CD8-positive, alpha-beta T cell (primary cell): ENCODE measurements at regions of chr22 and their contacts with region 1.

Region 1: GRCh38 chr22:31661851-31662656 is at the start of gene PISD:
- DNase-seq: peak; percentile 94 to 98 (median 97)
- ATAC-seq: peak; percentile 94
- H3K4me3 ChIP-seq: peak within 1 kb of the TSS; percentile 89 to 97
- H3K4me3 Mint-ChIP-seq: peak within 1 kb of the TSS; percentile 96
- H3K27ac ChIP-seq: peak within 1 kb of the TSS; percentile 73 to 79
- H3K27ac Mint-ChIP-seq: peak within 1 kb of the TSS; percentile 96
- H3K4me1 ChIP-seq: peaks cover 18% of the 10 kb centered on the region
- H3K4me1 Mint-ChIP-seq: peaks cover 41% of the 10 kb centered on the region
- H3K27me3 ChIP-seq: no peaks in the 10 kb centered on the region
- H3K27me3 Mint-ChIP-seq: no peaks in the 10 kb centered on the region
- CTCF ChIP-seq: no peak
- total RNA-seq, gene PISD: 41.2 to 43.6 TPM

Region 2: GRCh38 chr22:31399211-31400028 is 262.6 kb before region 1 on chr22 and contains the start of gene DRG1:
- CTCF ChIA-PET with region 1: no interaction called
- POLR2A ChIA-PET with region 1: interaction called, 3 read pairs
- intact Hi-C with region 1: loop called in 1 of 2 experiments (anchors 1 kb)
- DNase-seq: peak; percentile 91 to 98 (median 97)
- ATAC-seq: peak; percentile 96
- H3K4me3 ChIP-seq: peak within 1 kb of the TSS; percentile 76 to 99
- H3K4me3 Mint-ChIP-seq: peak within 1 kb of the TSS; percentile 95
- H3K27ac ChIP-seq: peak within 1 kb of the TSS; percentile 82 to 87
- H3K27ac Mint-ChIP-seq: peak within 1 kb of the TSS; percentile 96
- H3K4me1 ChIP-seq: peaks cover 13% of the 10 kb centered on the region
- H3K4me1 Mint-ChIP-seq: peaks cover 31% of the 10 kb centered on the region
- H3K27me3 ChIP-seq: no peaks in the 10 kb centered on the region
- H3K27me3 Mint-ChIP-seq: no peaks in the 10 kb centered on the region
- CTCF ChIP-seq: no peak
- total RNA-seq, gene DRG1: 55.9 to 63.3 TPM

Region 3: DNA sequence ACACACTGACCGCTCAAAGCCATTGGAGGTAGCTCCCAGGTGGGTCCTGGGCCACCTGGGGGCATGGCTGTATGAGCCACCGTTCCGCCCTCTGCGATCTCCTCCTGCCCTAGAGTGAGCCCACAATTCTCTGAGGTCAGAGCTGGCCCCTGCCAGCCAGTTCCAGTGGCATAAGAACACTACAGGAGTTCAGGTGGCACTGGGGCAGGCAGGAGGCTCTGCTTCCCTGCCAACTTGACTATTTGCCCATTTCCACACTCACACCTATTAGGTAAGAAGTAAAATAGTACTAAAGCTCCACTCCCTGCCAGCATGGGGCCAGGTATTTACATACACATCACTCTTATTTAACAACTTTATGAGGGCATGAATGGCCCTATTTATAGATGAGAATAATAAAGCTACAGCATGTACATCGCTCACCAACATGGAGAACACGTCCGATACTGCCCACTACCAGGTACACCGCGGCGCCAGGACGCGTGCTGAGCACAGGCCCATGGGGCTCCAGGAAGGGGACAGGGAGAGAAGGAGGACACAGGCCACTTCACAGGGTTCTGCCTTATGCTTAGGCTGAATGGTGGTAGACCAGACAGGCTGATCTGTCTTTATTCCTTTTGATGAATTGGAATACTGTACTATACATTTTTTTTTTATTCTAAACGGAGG is 26.3 kb before region 1 on chr22:
- CTCF ChIA-PET with region 1: interaction called, 22 read pairs
- POLR2A ChIA-PET with region 1: interaction called, 16 read pairs
- intact Hi-C with region 1: loop called (anchors 1 kb)
- DNase-seq: peak in 1 of 9 experiments; percentile 6
- ATAC-seq: no peak
- H3K4me3 ChIP-seq: no peak overlapping the region
- H3K4me3 Mint-ChIP-seq: no peak overlapping the region
- H3K27ac ChIP-seq: no peak overlapping the region
- H3K27ac Mint-ChIP-seq: peak overlapping the region; percentile 60
- H3K4me1 ChIP-seq: peaks cover 33% of the 10 kb centered on the region
- H3K4me1 Mint-ChIP-seq: peaks cover 42% of the 10 kb centered on the region
- H3K27me3 ChIP-seq: no peaks in the 10 kb centered on the region
- H3K27me3 Mint-ChIP-seq: no peaks in the 10 kb centered on the region
- CTCF ChIP-seq: no peak

Region 4: DNA sequence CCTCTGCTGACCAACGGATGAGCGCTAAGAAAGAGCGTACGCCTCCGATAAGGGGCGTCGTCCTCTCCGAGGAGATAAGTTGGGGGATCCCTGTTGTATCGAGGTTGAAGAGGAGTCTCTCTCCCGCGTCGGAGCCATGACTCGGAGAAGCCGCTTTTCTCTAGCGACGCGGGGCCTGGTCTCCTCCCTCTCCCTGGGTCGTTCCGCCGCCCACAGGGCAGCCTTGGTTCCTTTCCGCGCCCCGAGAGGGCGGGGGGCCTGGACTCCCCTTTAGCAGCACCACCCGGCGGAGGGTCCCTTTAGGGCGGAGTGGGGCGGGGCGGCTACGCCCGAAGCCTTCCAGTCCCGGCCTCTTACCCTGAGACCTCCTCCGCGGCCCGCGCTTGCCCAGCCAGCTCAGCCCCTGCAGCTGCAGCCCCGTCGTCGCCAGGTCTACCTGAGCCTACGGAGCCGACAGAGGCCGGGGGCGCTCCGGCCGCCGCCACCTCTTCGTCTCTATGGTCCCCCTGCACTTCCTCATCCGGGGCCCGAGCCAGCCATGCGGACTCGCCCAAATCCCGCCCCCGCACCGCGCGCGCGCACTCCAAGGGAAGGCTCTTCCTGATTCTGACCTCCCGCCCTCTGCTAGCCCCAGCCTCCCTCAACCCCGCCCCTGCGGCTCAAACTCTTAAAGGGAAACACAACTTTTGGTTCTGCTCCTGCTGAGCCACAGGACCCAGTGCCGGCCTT is 87.7 kb after region 1 on chr22 and contains the start of gene PRR14L:
- CTCF ChIA-PET with region 1: interaction called, 4 read pairs
- POLR2A ChIA-PET with region 1: interaction called, 14 read pairs
- intact Hi-C with region 1: loop called (anchors 1 kb)
- DNase-seq: peak; percentile 96 to 100 (median 99)
- ATAC-seq: peak; percentile 75
- H3K4me3 ChIP-seq: peak within 1 kb of the TSS; percentile 84 to 90
- H3K4me3 Mint-ChIP-seq: peak within 1 kb of the TSS; percentile 98
- H3K27ac ChIP-seq: peak within 1 kb of the TSS; percentile 79 to 84
- H3K27ac Mint-ChIP-seq: peak within 1 kb of the TSS; percentile 97
- H3K4me1 ChIP-seq: peaks cover 40% of the 10 kb centered on the region
- H3K4me1 Mint-ChIP-seq: peaks cover 53% of the 10 kb centered on the region
- H3K27me3 ChIP-seq: no peaks in the 10 kb centered on the region
- H3K27me3 Mint-ChIP-seq: no peaks in the 10 kb centered on the region
- CTCF ChIP-seq: no peak
- total RNA-seq, gene PRR14L: 17.8 to 21.2 TPM

Region 5: DNA sequence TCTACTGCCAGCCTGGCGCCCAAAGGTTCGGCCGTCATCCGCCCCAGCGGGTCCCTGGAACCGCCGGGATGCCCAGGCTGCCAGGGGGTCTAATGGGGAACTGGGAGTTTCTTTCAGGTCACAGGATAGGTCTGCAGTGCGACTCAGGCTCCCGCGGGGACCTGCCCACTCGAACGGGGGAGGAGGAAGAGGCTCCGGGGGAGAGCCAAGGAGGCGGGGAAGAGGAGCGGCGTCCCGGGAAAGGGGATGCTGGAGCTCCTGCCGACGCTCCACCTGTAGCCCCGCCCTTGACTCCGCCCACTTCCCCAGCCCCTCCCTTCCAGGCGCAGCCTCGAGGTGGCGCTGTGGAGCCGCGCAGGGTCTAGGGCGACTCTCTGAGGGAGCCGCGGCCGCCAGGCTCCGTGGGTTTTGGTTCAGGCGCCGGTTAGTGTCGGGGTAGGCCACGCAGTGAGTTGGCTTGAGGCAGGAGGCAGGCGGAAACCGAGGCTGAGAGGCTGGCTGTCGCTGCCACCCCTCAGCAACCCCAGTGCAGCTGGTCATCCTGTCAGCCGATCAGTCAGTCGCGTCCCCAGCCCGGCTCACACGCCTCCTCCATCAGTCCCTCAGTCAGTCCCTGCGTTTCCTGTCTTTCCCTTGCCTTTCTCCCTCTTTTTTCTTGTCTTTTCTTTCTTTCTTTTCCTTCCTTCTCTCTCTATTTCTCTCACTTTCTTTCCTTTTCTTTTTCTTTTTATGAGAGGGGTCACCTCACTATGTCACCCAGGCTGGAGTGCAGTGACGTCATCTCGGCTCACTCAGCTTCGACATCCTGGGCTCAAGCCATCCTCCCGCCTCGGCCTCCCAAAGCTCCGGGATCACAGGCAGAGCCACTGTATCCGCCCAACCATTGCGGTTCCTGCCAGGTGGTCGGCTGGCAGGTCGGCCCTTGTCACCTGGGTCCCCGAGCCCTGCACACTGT is 308.7 kb after region 1 on chr22:
- CTCF ChIA-PET with region 1: interaction called, 9 read pairs
- POLR2A ChIA-PET with region 1: no interaction called
- intact Hi-C with region 1: loop called (anchors 1 kb)
- DNase-seq: peak; percentile 79 to 93 (median 87)
- ATAC-seq: peak; percentile 99
- H3K4me3 ChIP-seq: peak overlapping the region; percentile 55 to 58
- H3K4me3 Mint-ChIP-seq: peak overlapping the region; percentile 81
- H3K27ac ChIP-seq: no peak overlapping the region
- H3K27ac Mint-ChIP-seq: peak overlapping the region; percentile 64
- H3K4me1 ChIP-seq: peaks cover 8% of the 10 kb centered on the region
- H3K4me1 Mint-ChIP-seq: peaks cover 12% of the 10 kb centered on the region
- H3K27me3 ChIP-seq: no peaks in the 10 kb centered on the region
- H3K27me3 Mint-ChIP-seq: no peaks in the 10 kb centered on the region
- CTCF ChIP-seq: peak; percentile 82